T-cell (primary cell): ENCODE measurements at regions of chr5 and their contacts with region 1.

Region 1: GRCh38 chr5:158701406-158702177 is 398.1 kb downstream of the EBF1 start:
- DNase-seq: no peak
- ATAC-seq: no peak
- H3K4me3 ChIP-seq: no peak overlapping the region
- H3K4me3 Mint-ChIP-seq: no peak overlapping the region
- H3K27ac ChIP-seq: no peak overlapping the region
- H3K27ac Mint-ChIP-seq: no peak overlapping the region
- H3K4me1 ChIP-seq: no peaks in the 10 kb centered on the region
- H3K4me1 Mint-ChIP-seq: no peaks in the 10 kb centered on the region
- H3K27me3 ChIP-seq: no peaks in the 10 kb centered on the region
- H3K27me3 Mint-ChIP-seq: no peaks in the 10 kb centered on the region

Region 2: GRCh38 chr5:158686214-158686613 is 15.4 kb before region 1 on chr5:
- CTCF ChIA-PET with region 1: interaction called, 3 to 15 read pairs
- POLR2A ChIA-PET with region 1: no interaction called
- DNase-seq: no peak
- ATAC-seq: no peak
- H3K4me3 ChIP-seq: no peak overlapping the region
- H3K4me3 Mint-ChIP-seq: no peak overlapping the region
- H3K27ac ChIP-seq: no peak overlapping the region
- H3K27ac Mint-ChIP-seq: no peak overlapping the region
- H3K4me1 ChIP-seq: no peaks in the 10 kb centered on the region
- H3K4me1 Mint-ChIP-seq: no peaks in the 10 kb centered on the region
- H3K27me3 ChIP-seq: no peaks in the 10 kb centered on the region
- H3K27me3 Mint-ChIP-seq: peaks cover 0 to 10% of the 10 kb centered on the region in 2 donors

Region 3: GRCh38 chr5:158718738-158719505 is 17.3 kb after region 1 on chr5:
- CTCF ChIA-PET with region 1: no interaction called
- POLR2A ChIA-PET with region 1: no interaction called
- DNase-seq: no peak
- ATAC-seq: no peak
- H3K4me3 ChIP-seq: no peak overlapping the region
- H3K4me3 Mint-ChIP-seq: no peak overlapping the region
- H3K27ac ChIP-seq: no peak overlapping the region
- H3K27ac Mint-ChIP-seq: no peak overlapping the region
- H3K4me1 ChIP-seq: no peaks in the 10 kb centered on the region
- H3K4me1 Mint-ChIP-seq: no peaks in the 10 kb centered on the region
- H3K27me3 ChIP-seq: no peaks in the 10 kb centered on the region
- H3K27me3 Mint-ChIP-seq: peaks cover 4% of the 10 kb centered on the region in 2 donors